ENCODE measurements at regions of chr16 and their contacts with region 1.

Region 1: GRCh38 chr16:15782573-15783365 is 74.1 kb downstream of the MYH11 start:
- DNase-seq: no peak
- ATAC-seq: no peak
- H3K4me3 ChIP-seq: no peak overlapping the region
- H3K27ac ChIP-seq: peak overlapping the region in 1 of 12 donors; percentile 75
- H3K4me1 ChIP-seq: no peaks in the 10 kb centered on the region
- H3K27me3 ChIP-seq: peaks cover 0 to 4% (median 0%) of the 10 kb centered on the region in 9 donors
- CTCF ChIP-seq: no peak
- POLR2A ChIP-seq: no peak

Region 2: DNA sequence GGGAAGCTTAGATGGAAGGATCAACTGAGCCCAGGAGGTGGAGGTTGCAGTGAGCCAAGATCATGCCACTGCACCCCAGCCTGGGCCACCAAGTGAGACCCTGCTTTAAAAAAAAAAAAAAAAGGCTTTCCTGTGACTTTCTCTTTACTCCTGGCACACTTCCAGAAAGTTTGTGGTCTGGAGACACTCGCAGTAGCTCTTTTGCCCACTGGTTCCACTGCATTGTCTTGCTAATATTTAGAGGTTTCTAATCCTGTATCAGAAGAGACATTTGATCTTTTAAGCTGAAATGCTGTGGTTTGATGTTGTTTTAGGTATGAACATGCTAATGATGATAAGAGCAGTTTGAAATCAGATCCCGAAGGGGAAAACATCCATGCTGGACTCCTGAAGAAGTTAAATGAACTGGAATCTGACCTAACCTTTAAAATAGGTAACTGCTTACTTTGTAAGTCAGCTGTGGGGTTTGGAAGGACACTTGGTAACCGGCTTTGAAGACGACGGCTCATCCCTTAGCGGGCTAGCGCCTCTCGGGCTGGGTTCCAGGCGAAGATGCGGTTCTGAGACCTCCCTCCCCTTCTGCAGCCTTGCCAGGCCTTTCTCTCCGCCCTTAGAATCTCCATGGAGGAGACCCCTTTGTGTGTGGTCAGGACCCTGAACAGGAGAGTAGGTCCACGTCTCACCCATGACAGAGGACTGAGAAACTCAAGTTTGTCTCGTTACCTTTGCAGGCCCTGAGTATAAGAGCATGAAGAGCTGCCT is 750.0 kb before region 1 on chr16:
- intact Hi-C with region 1: no loop called
- DNase-seq: no peak
- ATAC-seq: no peak
- H3K4me3 ChIP-seq: no peak overlapping the region
- H3K27ac ChIP-seq: peak overlapping the region in 7 of 12 donors; percentile 19 to 81 (median 66)
- H3K4me1 ChIP-seq: peaks cover 0 to 37% (median 21%) of the 10 kb centered on the region in 12 donors
- H3K27me3 ChIP-seq: no peaks in the 10 kb centered on the region
- CTCF ChIP-seq: no peak
- POLR2A ChIP-seq: no peak

Region 3: GRCh38 chr16:15822957-15823356 is 40.2 kb after region 1 on chr16:
- intact Hi-C with region 1: loop called in 1 of 10 experiments (anchors 5 kb)
- DNase-seq: no peak
- ATAC-seq: no peak
- H3K4me3 ChIP-seq: no peak overlapping the region
- H3K27ac ChIP-seq: peak overlapping the region in 1 of 12 donors; percentile 87
- H3K4me1 ChIP-seq: no peaks in the 10 kb centered on the region
- H3K27me3 ChIP-seq: no peaks in the 10 kb centered on the region
- CTCF ChIP-seq: no peak
- POLR2A ChIP-seq: no peak

Region 4: GRCh38 chr16:15835136-15835878 is 52.5 kb after region 1 on chr16:
- intact Hi-C with region 1: loop called in 1 of 10 experiments (anchors 10 kb)
- DNase-seq: no peak
- ATAC-seq: no peak
- H3K4me3 ChIP-seq: no peak overlapping the region
- H3K27ac ChIP-seq: peak overlapping the region in 1 of 12 donors; percentile 87
- H3K4me1 ChIP-seq: peaks cover 0 to 5% (median 0%) of the 10 kb centered on the region in 12 donors
- H3K27me3 ChIP-seq: peaks cover 0 to 2% (median 0%) of the 10 kb centered on the region in 9 donors
- CTCF ChIP-seq: no peak
- POLR2A ChIP-seq: no peak